CD4-positive, alpha-beta memory T cell (primary cell): ENCODE measurements at regions of chr5 and their contacts with region 1.

Region 1: DNA sequence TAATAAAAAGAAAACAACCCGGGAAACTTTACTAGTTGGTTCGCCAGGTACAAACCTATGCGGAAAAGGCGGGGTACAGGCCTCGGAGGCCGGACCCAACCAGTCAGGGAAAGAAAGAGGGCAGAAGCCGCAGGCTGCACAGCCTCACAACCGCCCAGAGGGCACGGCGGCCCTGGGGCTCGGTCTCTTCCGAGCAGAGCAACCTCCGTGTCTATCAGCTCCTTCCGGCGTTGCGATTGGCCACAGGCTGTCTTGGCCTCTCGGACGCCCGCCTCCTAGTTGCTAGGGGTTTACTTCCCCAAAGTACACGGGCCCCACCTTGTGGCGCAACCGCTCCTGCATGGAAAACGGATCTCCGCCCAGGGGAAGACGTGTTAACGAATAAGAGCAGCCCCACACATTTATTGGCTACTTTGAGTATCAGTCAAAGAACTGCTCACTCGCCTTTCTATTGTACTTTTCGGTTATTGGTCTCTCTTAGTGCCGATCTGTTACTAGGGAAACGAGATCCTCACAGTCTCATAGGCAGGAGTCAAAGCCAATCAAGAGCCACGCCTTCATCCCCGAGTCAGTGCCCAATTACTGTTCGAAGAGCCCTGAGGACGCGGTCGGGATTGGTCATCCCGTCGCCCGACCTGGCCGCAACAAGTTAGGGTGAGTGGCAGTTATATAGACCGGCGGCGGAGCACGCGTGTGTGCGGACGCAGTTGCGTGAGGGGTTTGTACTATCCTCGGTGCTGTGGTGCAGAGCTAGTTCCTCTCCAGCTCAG is at the start of gene G3BP1:
- DNase-seq: peak; percentile 97 to 100 (median 100)
- H3K4me3 ChIP-seq: peak within 1 kb of the TSS; percentile 59 to 76
- H3K4me3 Mint-ChIP-seq: peak within 1 kb of the TSS; percentile 85 to 96 (median 94)
- H3K27ac ChIP-seq: peak within 1 kb of the TSS; percentile 92
- H3K27ac Mint-ChIP-seq: peak within 1 kb of the TSS in 6 of 7 donors; percentile 12 to 96 (median 88)
- H3K4me1 ChIP-seq: peaks cover 51% of the 10 kb centered on the region
- H3K4me1 Mint-ChIP-seq: peaks cover 31 to 51% (median 39%) of the 10 kb centered on the region in 4 donors
- H3K27me3 ChIP-seq: no peaks in the 10 kb centered on the region
- H3K27me3 Mint-ChIP-seq: no peaks in the 10 kb centered on the region
- total RNA-seq, gene G3BP1: 189 to 193 TPM

Region 2: GRCh38 chr5:150357326-150358260 is 1413.9 kb before region 1 on chr5 and contains the start of gene TCOF1:
- CTCF ChIA-PET with region 1: no interaction called
- POLR2A ChIA-PET with region 1: no interaction called
- intact Hi-C with region 1: loop called (anchors 1 kb)
- DNase-seq: peak; percentile 94 to 97 (median 96)
- H3K4me3 ChIP-seq: peak within 1 kb of the TSS; percentile 66 to 76
- H3K4me3 Mint-ChIP-seq: peak within 1 kb of the TSS; percentile 88 to 93 (median 91)
- H3K27ac ChIP-seq: peak within 1 kb of the TSS; percentile 70
- H3K27ac Mint-ChIP-seq: peak within 1 kb of the TSS; percentile 68 to 98 (median 94)
- H3K4me1 ChIP-seq: peaks cover 28% of the 10 kb centered on the region
- H3K4me1 Mint-ChIP-seq: peaks cover 30 to 59% (median 41%) of the 10 kb centered on the region in 4 donors
- H3K27me3 ChIP-seq: no peaks in the 10 kb centered on the region
- H3K27me3 Mint-ChIP-seq: peaks cover 0 to 1% of the 10 kb centered on the region in 2 donors
- total RNA-seq, gene TCOF1: 53.8 to 59.9 TPM

Region 3: GRCh38 chr5:151157426-151158286 is 613.8 kb before region 1 on chr5 and contains the start of gene ANXA6:
- CTCF ChIA-PET with region 1: no interaction called
- POLR2A ChIA-PET with region 1: no interaction called
- intact Hi-C with region 1: loop called (anchors 5 kb)
- DNase-seq: peak; percentile 58 to 71 (median 64)
- H3K4me3 ChIP-seq: peak within 1 kb of the TSS; percentile 80 to 90
- H3K4me3 Mint-ChIP-seq: peak within 1 kb of the TSS; percentile 91 to 99 (median 97)
- H3K27ac ChIP-seq: peak within 1 kb of the TSS; percentile 84
- H3K27ac Mint-ChIP-seq: peak within 1 kb of the TSS; percentile 93 to 99 (median 97)
- H3K4me1 ChIP-seq: peaks cover 55% of the 10 kb centered on the region
- H3K4me1 Mint-ChIP-seq: peaks cover 37 to 73% (median 51%) of the 10 kb centered on the region in 4 donors
- H3K27me3 ChIP-seq: no peaks in the 10 kb centered on the region
- H3K27me3 Mint-ChIP-seq: no peaks in the 10 kb centered on the region
- total RNA-seq, gene ANXA6: 318 to 342 TPM

Region 4: GRCh38 chr5:151270599-151270998 is 500.8 kb before region 1 on chr5:
- CTCF ChIA-PET with region 1: no interaction called
- POLR2A ChIA-PET with region 1: no interaction called
- intact Hi-C with region 1: no loop called
- DNase-seq: no peak
- H3K4me3 ChIP-seq: no peak overlapping the region
- H3K4me3 Mint-ChIP-seq: no peak overlapping the region
- H3K27ac ChIP-seq: no peak overlapping the region
- H3K27ac Mint-ChIP-seq: no peak overlapping the region
- H3K4me1 ChIP-seq: no peaks in the 10 kb centered on the region
- H3K4me1 Mint-ChIP-seq: no peaks in the 10 kb centered on the region
- H3K27me3 ChIP-seq: no peaks in the 10 kb centered on the region
- H3K27me3 Mint-ChIP-seq: no peaks in the 10 kb centered on the region

Region 5: GRCh38 chr5:151406322-151406947 is 365.0 kb before region 1 on chr5:
- CTCF ChIA-PET with region 1: no interaction called
- POLR2A ChIA-PET with region 1: no interaction called
- intact Hi-C with region 1: no loop called
- DNase-seq: no peak
- H3K4me3 ChIP-seq: no peak overlapping the region
- H3K4me3 Mint-ChIP-seq: no peak overlapping the region
- H3K27ac ChIP-seq: no peak overlapping the region
- H3K27ac Mint-ChIP-seq: no peak overlapping the region
- H3K4me1 ChIP-seq: no peaks in the 10 kb centered on the region
- H3K4me1 Mint-ChIP-seq: peaks cover 0 to 1% (median 0%) of the 10 kb centered on the region in 4 donors
- H3K27me3 ChIP-seq: peaks cover 3% of the 10 kb centered on the region
- H3K27me3 Mint-ChIP-seq: peaks cover 24 to 38% of the 10 kb centered on the region in 2 donors

Region 6: GRCh38 chr5:151447174-151448037 is 324.0 kb before region 1 on chr5 and contains the start of gene SLC36A1:
- CTCF ChIA-PET with region 1: interaction called, 4 read pairs
- POLR2A ChIA-PET with region 1: interaction called, 12 read pairs
- intact Hi-C with region 1: loop called (anchors 1 kb)
- DNase-seq: peak; percentile 85 to 89 (median 86)
- H3K4me3 ChIP-seq: peak within 1 kb of the TSS; percentile 48 to 97
- H3K4me3 Mint-ChIP-seq: peak within 1 kb of the TSS; percentile 92 to 99 (median 98)
- H3K27ac ChIP-seq: peak within 1 kb of the TSS; percentile 64
- H3K27ac Mint-ChIP-seq: peak within 1 kb of the TSS; percentile 80 to 97 (median 95)
- H3K4me1 ChIP-seq: peaks cover 23% of the 10 kb centered on the region
- H3K4me1 Mint-ChIP-seq: peaks cover 12 to 27% (median 15%) of the 10 kb centered on the region in 4 donors
- H3K27me3 ChIP-seq: peaks cover 3% of the 10 kb centered on the region
- H3K27me3 Mint-ChIP-seq: peaks cover 9 to 16% of the 10 kb centered on the region in 2 donors
- total RNA-seq, gene SLC36A1: 5.2 to 7.8 TPM

Region 7: GRCh38 chr5:151671950-151672349 is 99.5 kb before region 1 on chr5:
- CTCF ChIA-PET with region 1: no interaction called
- POLR2A ChIA-PET with region 1: no interaction called
- intact Hi-C with region 1: no loop called
- DNase-seq: no peak
- H3K4me3 ChIP-seq: no peak overlapping the region
- H3K4me3 Mint-ChIP-seq: no peak overlapping the region
- H3K27ac ChIP-seq: no peak overlapping the region
- H3K27ac Mint-ChIP-seq: no peak overlapping the region
- H3K4me1 ChIP-seq: no peaks in the 10 kb centered on the region
- H3K4me1 Mint-ChIP-seq: no peaks in the 10 kb centered on the region
- H3K27me3 ChIP-seq: no peaks in the 10 kb centered on the region
- H3K27me3 Mint-ChIP-seq: peaks cover 2 to 4% of the 10 kb centered on the region in 2 donors

Region 8: DNA sequence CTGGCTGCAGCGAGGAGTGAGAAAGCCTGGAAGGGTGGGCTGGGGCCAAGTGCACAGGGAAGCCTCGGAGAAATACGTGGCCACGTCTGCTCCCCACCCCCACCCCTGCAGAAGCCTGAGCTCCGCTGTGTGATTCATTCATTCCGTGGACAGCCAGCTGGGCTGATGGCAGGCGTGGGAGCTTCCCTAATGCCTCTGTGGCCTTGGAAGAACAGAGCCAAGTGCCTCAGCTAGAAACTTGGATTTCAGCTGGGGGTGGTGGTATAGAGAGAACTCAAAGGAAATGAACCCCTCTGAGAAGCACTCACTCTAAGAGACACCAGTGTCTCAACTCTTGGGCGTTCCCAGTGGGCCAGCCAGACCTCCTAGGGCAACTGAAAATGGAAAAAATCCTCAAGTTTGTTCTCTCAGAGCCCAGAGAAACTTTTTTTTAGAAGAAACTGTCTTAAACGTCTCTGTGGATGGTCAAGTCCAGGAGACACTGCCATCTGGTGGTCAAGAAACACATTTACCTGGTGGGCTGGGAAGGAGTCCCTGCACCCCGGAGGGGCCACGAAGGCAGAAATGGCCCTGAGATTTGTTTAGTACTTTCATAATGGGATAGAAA is 31.0 kb before region 1 on chr5:
- CTCF ChIA-PET with region 1: interaction called, 4 read pairs
- POLR2A ChIA-PET with region 1: interaction called, 3 read pairs
- intact Hi-C with region 1: loop called (anchors 2 kb)
- DNase-seq: peak; percentile 38 to 58 (median 52)
- H3K4me3 ChIP-seq: no peak overlapping the region
- H3K4me3 Mint-ChIP-seq: peak overlapping the region in 1 of 8 donors; percentile 40
- H3K27ac ChIP-seq: no peak overlapping the region
- H3K27ac Mint-ChIP-seq: peak overlapping the region in 4 of 7 donors; percentile 5 to 75 (median 55)
- H3K4me1 ChIP-seq: peaks cover 19% of the 10 kb centered on the region
- H3K4me1 Mint-ChIP-seq: peaks cover 14 to 24% (median 22%) of the 10 kb centered on the region in 4 donors
- H3K27me3 ChIP-seq: no peaks in the 10 kb centered on the region
- H3K27me3 Mint-ChIP-seq: no peaks in the 10 kb centered on the region

Region 9: DNA sequence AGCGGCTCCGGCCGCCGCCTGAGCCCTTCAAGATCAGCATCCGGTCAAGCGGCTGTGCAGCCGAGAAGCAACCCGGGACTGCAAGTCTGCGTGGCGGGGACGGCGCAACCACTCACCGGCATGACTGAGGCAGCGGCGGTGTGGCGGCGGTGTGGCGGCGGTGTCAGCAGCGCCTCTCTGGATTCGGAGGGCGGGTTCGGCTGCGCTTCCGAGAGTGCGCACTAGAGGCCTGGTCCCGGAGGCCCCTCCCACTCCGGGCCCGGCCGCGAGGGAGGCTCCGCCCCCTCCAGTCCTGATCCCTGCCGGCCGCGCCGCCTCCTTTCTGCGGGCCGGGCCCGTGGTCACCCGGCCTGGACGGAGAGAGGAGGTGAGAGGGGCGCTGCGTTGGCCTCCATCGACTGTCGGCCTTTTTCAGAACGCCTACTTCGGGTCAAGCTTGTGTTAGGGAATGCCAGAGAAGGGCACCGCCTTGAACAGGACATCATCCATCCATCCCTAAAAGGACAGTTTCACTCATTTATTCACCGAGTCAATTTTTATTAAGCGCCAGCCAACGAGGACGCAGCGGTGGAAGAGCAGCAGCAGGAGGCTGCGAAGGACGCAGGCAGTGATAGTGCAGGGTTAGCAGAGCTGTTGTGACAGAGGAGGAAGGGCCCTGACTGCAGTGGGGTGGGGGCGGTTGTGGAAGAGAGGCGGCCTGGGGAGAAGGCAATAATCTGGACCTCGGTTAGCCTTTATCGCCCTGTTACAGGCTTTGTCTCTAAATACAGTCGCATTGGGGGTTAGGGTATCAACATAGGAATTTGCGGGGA is 12.8 kb before region 1 on chr5 and contains the start of gene ATOX1:
- CTCF ChIA-PET with region 1: interaction called, 21 read pairs
- POLR2A ChIA-PET with region 1: interaction called, 214 read pairs
- intact Hi-C with region 1: loop called (anchors 1 kb)
- DNase-seq: peak; percentile 88 to 90 (median 90)
- H3K4me3 ChIP-seq: peak within 1 kb of the TSS; percentile 90 to 93
- H3K4me3 Mint-ChIP-seq: peak within 1 kb of the TSS; percentile 86 to 99 (median 91)
- H3K27ac ChIP-seq: peak within 1 kb of the TSS; percentile 85
- H3K27ac Mint-ChIP-seq: peak within 1 kb of the TSS; percentile 77 to 97 (median 95)
- H3K4me1 ChIP-seq: peaks cover 38% of the 10 kb centered on the region
- H3K4me1 Mint-ChIP-seq: peaks cover 25 to 55% (median 34%) of the 10 kb centered on the region in 4 donors
- H3K27me3 ChIP-seq: no peaks in the 10 kb centered on the region
- H3K27me3 Mint-ChIP-seq: no peaks in the 10 kb centered on the region
- total RNA-seq, gene ATOX1: 28.2 to 31.0 TPM

Region 10: GRCh38 chr5:151958111-151958510 is 186.7 kb after region 1 on chr5:
- CTCF ChIA-PET with region 1: no interaction called
- POLR2A ChIA-PET with region 1: interaction called, 10 read pairs
- intact Hi-C with region 1: no loop called
- DNase-seq: no peak
- H3K4me3 ChIP-seq: no peak overlapping the region
- H3K4me3 Mint-ChIP-seq: peak overlapping the region in 1 of 8 donors; percentile 14
- H3K27ac ChIP-seq: no peak overlapping the region
- H3K27ac Mint-ChIP-seq: peak overlapping the region in 5 of 7 donors; percentile 6 to 85 (median 49)
- H3K4me1 ChIP-seq: peaks cover 41% of the 10 kb centered on the region
- H3K4me1 Mint-ChIP-seq: peaks cover 39 to 68% (median 54%) of the 10 kb centered on the region in 4 donors
- H3K27me3 ChIP-seq: no peaks in the 10 kb centered on the region
- H3K27me3 Mint-ChIP-seq: no peaks in the 10 kb centered on the region

Region 11: GRCh38 chr5:153562189-153562588 is 1790.7 kb after region 1 on chr5:
- CTCF ChIA-PET with region 1: no interaction called
- POLR2A ChIA-PET with region 1: no interaction called
- intact Hi-C with region 1: no loop called
- DNase-seq: no peak
- H3K4me3 ChIP-seq: no peak overlapping the region
- H3K4me3 Mint-ChIP-seq: no peak overlapping the region
- H3K27ac ChIP-seq: no peak overlapping the region
- H3K27ac Mint-ChIP-seq: no peak overlapping the region
- H3K4me1 ChIP-seq: no peaks in the 10 kb centered on the region
- H3K4me1 Mint-ChIP-seq: no peaks in the 10 kb centered on the region
- H3K27me3 ChIP-seq: no peaks in the 10 kb centered on the region
- H3K27me3 Mint-ChIP-seq: peaks cover 0 to 2% of the 10 kb centered on the region in 2 donors